GM12878 (cell line): ENCODE measurements at regions of chr19 and their contacts with region 1.

Region 1: DNA sequence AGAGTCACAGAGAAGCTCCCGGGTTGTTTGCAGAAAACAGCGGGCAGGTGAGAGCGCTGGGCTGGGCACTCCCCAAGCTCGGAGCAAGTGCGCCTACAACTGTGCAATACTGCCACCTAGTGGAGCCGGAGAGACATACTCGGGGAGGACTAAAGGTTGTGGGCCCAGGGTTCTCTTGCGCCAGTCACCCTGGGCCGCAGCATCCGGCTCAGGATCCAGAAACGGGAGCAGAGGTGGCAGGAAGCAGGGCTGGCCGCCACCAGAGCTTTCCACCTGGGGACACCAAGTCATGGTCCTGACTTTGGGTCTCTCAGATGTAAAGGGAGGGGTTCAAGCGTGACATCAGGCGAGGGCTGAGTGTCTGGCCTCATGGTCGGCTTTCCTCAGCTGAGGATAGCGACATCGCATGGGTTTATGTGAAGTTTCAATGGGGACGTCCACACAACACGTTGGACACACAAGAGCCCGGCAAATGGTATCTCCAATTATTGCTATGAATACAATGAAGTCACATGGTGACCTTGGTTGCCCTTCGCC is 11.2 kb upstream of the KLK4 start:
- DNase-seq: peak; percentile 27
- ATAC-seq: peak; percentile 100
- H3K4me3 ChIP-seq: no peak overlapping the region
- H3K27ac ChIP-seq: no peak overlapping the region
- H3K4me1 ChIP-seq: no peaks in the 10 kb centered on the region
- H3K27me3 ChIP-seq: no peaks in the 10 kb centered on the region
- CTCF ChIP-seq: peak; percentile 82 to 95 (median 85); a peak in 5 of 6 replicates
- EP300 ChIP-seq: no peak
- POLR2A ChIP-seq: no peak
- RAD21 ChIP-seq: peak; percentile 93

Region 2: GRCh38 chr19:50705422-50706019 is 216.9 kb before region 1 on chr19:
- CTCF ChIA-PET with region 1: interaction called, 9 read pairs
- POLR2A ChIA-PET with region 1: no interaction called
- RAD21 ChIA-PET with region 1: interaction called, 16 read pairs
- SMC1A ChIA-PET with region 1: interaction called, 12 read pairs
- in situ Hi-C with region 1: no loop called
- intact Hi-C with region 1: loop called (anchors 1 kb)
- DNase-seq: peak; percentile 21
- ATAC-seq: peak; percentile 96
- H3K4me3 ChIP-seq: no peak overlapping the region
- H3K27ac ChIP-seq: no peak overlapping the region
- H3K4me1 ChIP-seq: no peaks in the 10 kb centered on the region
- H3K27me3 ChIP-seq: no peaks in the 10 kb centered on the region; a peak in 1 of 4 replicates
- CTCF ChIP-seq: peak; percentile 65 to 84 (median 73)
- EP300 ChIP-seq: no peak
- POLR2A ChIP-seq: no peak
- RAD21 ChIP-seq: peak; percentile 62

Region 3: DNA sequence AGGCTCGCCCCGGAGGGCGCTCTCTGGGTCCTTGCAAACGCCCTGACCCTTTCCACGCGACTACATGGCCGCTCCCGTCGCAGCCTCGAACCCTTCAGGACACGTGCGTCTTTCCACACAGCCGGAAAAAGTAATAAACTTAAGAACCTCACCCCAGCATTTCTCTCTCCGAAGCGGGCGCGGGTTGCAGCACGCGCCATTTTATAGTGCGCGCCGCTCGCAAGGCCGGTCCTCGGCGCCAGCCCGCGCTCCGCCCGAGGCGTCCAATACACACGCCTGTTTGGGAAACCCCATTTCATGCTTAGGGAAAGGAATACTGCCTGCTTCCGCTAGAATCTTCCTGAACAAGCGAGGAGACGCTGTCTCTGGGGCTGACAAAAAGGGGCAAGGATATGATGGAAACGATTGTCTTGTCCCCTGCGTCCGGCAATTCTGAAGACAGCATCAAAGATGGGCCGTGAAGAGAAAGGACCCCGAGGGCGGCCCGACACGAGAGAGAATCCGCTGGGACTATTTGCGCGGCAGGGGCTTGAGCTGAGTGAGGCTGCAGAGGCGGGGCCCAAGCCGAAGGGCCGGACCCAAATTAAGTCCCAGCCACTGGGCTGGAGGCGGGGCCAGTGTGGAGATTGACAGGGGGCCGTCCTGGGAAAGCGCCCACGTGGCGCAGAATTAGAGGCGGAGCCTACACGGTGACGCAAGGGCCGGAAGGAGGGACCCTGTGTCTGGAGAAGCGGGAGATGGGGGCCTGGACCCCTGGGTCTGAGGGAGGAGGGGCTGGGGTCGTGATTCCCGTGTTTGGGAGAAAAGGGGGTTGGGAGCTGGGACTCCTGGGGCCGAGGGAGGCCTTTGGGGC is 117.7 kb before region 1 on chr19:
- CTCF ChIA-PET with region 1: interaction called, 6 read pairs
- POLR2A ChIA-PET with region 1: interaction called, 3 read pairs
- RAD21 ChIA-PET with region 1: interaction called, 8 read pairs
- SMC1A ChIA-PET with region 1: interaction called, 13 read pairs
- in situ Hi-C with region 1: no loop called
- intact Hi-C with region 1: no loop called
- DNase-seq: peak; percentile 91
- ATAC-seq: peak; percentile 95
- H3K4me3 ChIP-seq: peak overlapping the region; percentile 98
- H3K27ac ChIP-seq: peak overlapping the region; percentile 97
- H3K4me1 ChIP-seq: peaks cover 7% of the 10 kb centered on the region
- H3K27me3 ChIP-seq: no peaks in the 10 kb centered on the region
- CTCF ChIP-seq: no peak
- EP300 ChIP-seq: no peak
- POLR2A ChIP-seq: peak; percentile 97
- RAD21 ChIP-seq: 0 out of 2 replicates have a peak, but pooled peaks have one; percentile 8

Region 4: GRCh38 chr19:50844296-50844935 is 78.0 kb before region 1 on chr19:
- CTCF ChIA-PET with region 1: interaction called, 40 read pairs
- POLR2A ChIA-PET with region 1: no interaction called
- RAD21 ChIA-PET with region 1: interaction called, 41 read pairs
- SMC1A ChIA-PET with region 1: interaction called, 37 read pairs
- in situ Hi-C with region 1: no loop called
- intact Hi-C with region 1: no loop called
- DNase-seq: no peak
- ATAC-seq: no peak
- H3K4me3 ChIP-seq: no peak overlapping the region
- H3K27ac ChIP-seq: no peak overlapping the region
- H3K4me1 ChIP-seq: no peaks in the 10 kb centered on the region; the same call in 1 of the 2 replicates
- H3K27me3 ChIP-seq: no peaks in the 10 kb centered on the region
- CTCF ChIP-seq: no peak
- EP300 ChIP-seq: no peak
- POLR2A ChIP-seq: no peak
- RAD21 ChIP-seq: no peak

Region 5: GRCh38 chr19:50909240-50910070 is 12.9 kb before region 1 on chr19:
- CTCF ChIA-PET with region 1: interaction called, 42 read pairs
- POLR2A ChIA-PET with region 1: interaction called, 3 read pairs
- RAD21 ChIA-PET with region 1: interaction called, 16 read pairs
- SMC1A ChIA-PET with region 1: interaction called, 32 read pairs
- in situ Hi-C with region 1: no loop called
- intact Hi-C with region 1: no loop called
- DNase-seq: no peak
- ATAC-seq: peak; percentile 69
- H3K4me3 ChIP-seq: peak overlapping the region; percentile 47; the same call in 1 of the 2 replicates
- H3K27ac ChIP-seq: no peak overlapping the region
- H3K4me1 ChIP-seq: no peaks in the 10 kb centered on the region
- H3K27me3 ChIP-seq: peaks cover 4 to 9% of the 10 kb centered on the region in 2 experiments; a peak in 3 of 4 replicates
- CTCF ChIP-seq: no peak
- EP300 ChIP-seq: no peak
- POLR2A ChIP-seq: no peak
- RAD21 ChIP-seq: no peak

Region 6: DNA sequence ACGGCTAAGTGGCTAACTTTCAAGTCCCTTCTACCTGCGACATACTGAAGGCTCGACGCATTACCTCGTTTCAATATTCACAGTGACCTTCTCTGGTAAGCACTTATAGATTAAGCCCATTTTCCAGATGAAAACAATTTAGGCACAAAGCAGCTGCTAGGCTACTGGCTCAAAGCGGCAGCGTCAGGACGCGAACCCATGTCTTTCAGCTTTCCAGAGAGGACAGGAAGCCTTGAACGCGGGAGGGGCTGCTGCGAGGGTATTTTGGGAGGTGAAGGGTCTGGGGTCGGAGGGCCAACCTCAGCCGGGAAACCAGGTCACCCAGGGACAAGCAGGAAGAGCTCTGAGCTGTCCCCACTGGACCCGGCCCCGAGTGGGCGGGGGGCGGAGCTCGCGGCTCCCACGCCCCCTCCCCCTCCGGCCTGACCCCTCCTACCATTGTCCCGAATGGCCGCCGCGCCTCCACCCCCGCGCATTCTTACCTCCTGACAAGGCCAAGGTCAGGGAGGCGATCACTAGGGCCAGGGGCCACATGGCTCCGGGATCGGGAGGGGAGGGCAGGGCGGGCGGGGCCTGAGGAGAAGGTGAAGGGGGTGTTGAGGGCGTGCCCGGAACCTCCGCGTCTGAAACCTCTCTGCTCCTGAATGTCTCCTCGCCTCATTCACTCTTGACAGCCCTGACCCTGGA is 142.3 kb after region 1 on chr19 and contains the start of gene KLK13:
- CTCF ChIA-PET with region 1: no interaction called
- POLR2A ChIA-PET with region 1: no interaction called
- RAD21 ChIA-PET with region 1: no interaction called
- SMC1A ChIA-PET with region 1: no interaction called
- in situ Hi-C with region 1: no loop called
- intact Hi-C with region 1: no loop called
- DNase-seq: no peak
- ATAC-seq: no peak
- H3K4me3 ChIP-seq: no peak within 1 kb of the TSS
- H3K27ac ChIP-seq: no peak within 1 kb of the TSS
- H3K4me1 ChIP-seq: no peaks in the 10 kb centered on the region
- H3K27me3 ChIP-seq: no peaks in the 10 kb centered on the region; a peak in 1 of 4 replicates
- CTCF ChIP-seq: no peak
- EP300 ChIP-seq: no peak
- POLR2A ChIP-seq: no peak
- RAD21 ChIP-seq: no peak
- polyA plus RNA-seq, gene KLK13: not detected